ENCODE measurements at regions of chr5 and their contacts with region 1.

Region 1: DNA sequence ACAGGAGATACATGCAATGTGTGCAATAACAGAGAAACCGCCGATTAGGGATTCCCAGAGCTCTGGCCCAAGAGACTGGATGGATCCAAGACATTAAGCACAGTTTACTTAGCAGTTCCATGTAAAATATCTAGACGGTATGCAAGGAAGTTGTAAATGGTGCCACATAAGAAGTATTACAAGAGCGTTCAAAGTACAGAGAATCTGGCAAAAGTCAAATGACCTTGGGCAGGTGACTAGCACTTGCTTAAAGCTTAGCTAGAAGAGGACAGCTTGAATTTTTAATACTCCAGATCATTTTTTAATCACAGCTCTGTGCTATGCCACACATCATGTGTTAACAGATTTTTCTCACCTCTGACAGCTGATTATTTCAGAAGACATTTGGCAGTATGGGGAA is 72.3 kb upstream of the TNPO1 start:
- DNase-seq: no peak
- ATAC-seq: no peak
- H3K4me3 ChIP-seq: no peak overlapping the region
- H3K27ac ChIP-seq: no peak overlapping the region
- H3K4me1 ChIP-seq: no peaks in the 10 kb centered on the region
- H3K27me3 ChIP-seq: no peaks in the 10 kb centered on the region; the same call in 1 of the 2 replicates
- CTCF ChIP-seq: no peak
- POLR2A ChIP-seq: no peak
- RAD21 ChIP-seq: no peak

Region 2: GRCh38 chr5:72611118-72611730 is 132.9 kb before region 1 on chr5:
- CTCF ChIA-PET with region 1: no interaction called
- POLR2A ChIA-PET with region 1: no interaction called
- dilution Hi-C with region 1: no loop called
- in situ Hi-C with region 1: no loop called
- intact Hi-C with region 1: loop called (anchors 5 kb)
- DNase-seq: peak; percentile 74
- ATAC-seq: peak; percentile 97
- H3K4me3 ChIP-seq: no peak overlapping the region
- H3K27ac ChIP-seq: no peak overlapping the region
- H3K4me1 ChIP-seq: peaks cover 3% of the 10 kb centered on the region
- H3K27me3 ChIP-seq: no peaks in the 10 kb centered on the region
- CTCF ChIP-seq: peak; percentile 88
- POLR2A ChIP-seq: no peak
- RAD21 ChIP-seq: peak; percentile 83

Region 3: GRCh38 chr5:72776684-72777083 is 32.5 kb after region 1 on chr5:
- CTCF ChIA-PET with region 1: no interaction called
- POLR2A ChIA-PET with region 1: no interaction called
- dilution Hi-C with region 1: no loop called
- in situ Hi-C with region 1: no loop called
- intact Hi-C with region 1: loop called (anchors 5 kb)
- DNase-seq: no peak
- ATAC-seq: no peak
- H3K4me3 ChIP-seq: no peak overlapping the region
- H3K27ac ChIP-seq: no peak overlapping the region
- H3K4me1 ChIP-seq: no peaks in the 10 kb centered on the region
- H3K27me3 ChIP-seq: peaks cover 3% of the 10 kb centered on the region
- CTCF ChIP-seq: no peak
- POLR2A ChIP-seq: no peak
- RAD21 ChIP-seq: no peak